Motor neuron (in vitro differentiated cells): ENCODE measurements at regions of chr2 and their contacts with region 1.

Region 1: DNA sequence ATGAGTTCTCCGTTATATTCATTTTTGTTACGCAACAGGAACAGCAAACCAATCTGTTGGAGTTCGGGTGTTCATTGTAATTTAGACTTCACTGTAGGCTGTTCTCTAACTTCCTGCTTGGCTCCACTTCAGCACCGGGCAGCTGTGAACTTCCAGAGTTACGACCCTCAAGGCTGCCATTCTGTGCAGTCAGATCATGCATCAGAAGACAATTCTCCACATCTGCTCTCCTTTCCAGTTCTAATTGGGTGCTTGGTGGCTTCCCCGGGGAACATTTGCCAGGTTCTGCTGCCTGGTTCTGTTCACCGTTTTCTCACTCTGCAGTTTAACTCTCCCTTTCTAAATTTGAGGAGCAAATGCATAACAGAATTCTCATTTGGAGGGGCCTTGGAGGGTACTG is 237.7 kb downstream of the NYAP2 start:
- ATAC-seq: peak in 2 of 8 experiments; percentile 26 to 77
- H3K4me3 ChIP-seq: no peak overlapping the region
- H3K27ac ChIP-seq: no peak overlapping the region
- H3K4me1 ChIP-seq: no peaks in the 10 kb centered on the region

Region 2: GRCh38 chr2:225137971-225138370 is 499.3 kb before region 1 on chr2:
- in situ Hi-C with region 1: loop called in 1 of 9 experiments (anchors 25 kb)
- ATAC-seq: no peak
- H3K4me3 ChIP-seq: no peak overlapping the region
- H3K27ac ChIP-seq: no peak overlapping the region
- H3K4me1 ChIP-seq: no peaks in the 10 kb centered on the region

Region 3: GRCh38 chr2:225379716-225380255 is 257.5 kb before region 1 on chr2:
- in situ Hi-C with region 1: no loop called
- ATAC-seq: no peak
- H3K4me3 ChIP-seq: no peak overlapping the region
- H3K27ac ChIP-seq: no peak overlapping the region
- H3K4me1 ChIP-seq: peaks cover 2 to 18% of the 10 kb centered on the region in 2 donors